Natural killer cell (primary cell): ENCODE measurements at regions of chr15 and their contacts with region 1.

Region 1: GRCh38 chr15:57527382-57528091 is 64.2 kb upstream of the MYZAP start:
- DNase-seq: peak in 1 of 2 donors; percentile 63
- ATAC-seq: peak in 1 of 3 donors; percentile 57
- H3K4me3 ChIP-seq: no peak overlapping the region
- H3K4me3 Mint-ChIP-seq: no peak overlapping the region
- H3K27ac ChIP-seq: no peak overlapping the region
- H3K27ac Mint-ChIP-seq: no peak overlapping the region
- H3K4me1 ChIP-seq: no peaks in the 10 kb centered on the region
- H3K4me1 Mint-ChIP-seq: no peaks in the 10 kb centered on the region
- H3K27me3 ChIP-seq: no peaks in the 10 kb centered on the region
- H3K27me3 Mint-ChIP-seq: peaks cover 7 to 22% of the 10 kb centered on the region in 2 donors
- CTCF ChIP-seq: peak; percentile 14

Region 2: GRCh38 chr15:56821721-56822425 is 705.7 kb before region 1 on chr15:
- intact Hi-C with region 1: loop called (anchors 5 kb)
- DNase-seq: peak; percentile 41 to 61
- ATAC-seq: peak; percentile 76 to 85 (median 78)
- H3K4me3 ChIP-seq: no peak overlapping the region
- H3K4me3 Mint-ChIP-seq: no peak overlapping the region
- H3K27ac ChIP-seq: no peak overlapping the region
- H3K27ac Mint-ChIP-seq: no peak overlapping the region
- H3K4me1 ChIP-seq: no peaks in the 10 kb centered on the region
- H3K4me1 Mint-ChIP-seq: no peaks in the 10 kb centered on the region
- H3K27me3 ChIP-seq: no peaks in the 10 kb centered on the region
- H3K27me3 Mint-ChIP-seq: peaks cover 0 to 2% of the 10 kb centered on the region in 2 donors
- CTCF ChIP-seq: peak; percentile 78

Region 3: DNA sequence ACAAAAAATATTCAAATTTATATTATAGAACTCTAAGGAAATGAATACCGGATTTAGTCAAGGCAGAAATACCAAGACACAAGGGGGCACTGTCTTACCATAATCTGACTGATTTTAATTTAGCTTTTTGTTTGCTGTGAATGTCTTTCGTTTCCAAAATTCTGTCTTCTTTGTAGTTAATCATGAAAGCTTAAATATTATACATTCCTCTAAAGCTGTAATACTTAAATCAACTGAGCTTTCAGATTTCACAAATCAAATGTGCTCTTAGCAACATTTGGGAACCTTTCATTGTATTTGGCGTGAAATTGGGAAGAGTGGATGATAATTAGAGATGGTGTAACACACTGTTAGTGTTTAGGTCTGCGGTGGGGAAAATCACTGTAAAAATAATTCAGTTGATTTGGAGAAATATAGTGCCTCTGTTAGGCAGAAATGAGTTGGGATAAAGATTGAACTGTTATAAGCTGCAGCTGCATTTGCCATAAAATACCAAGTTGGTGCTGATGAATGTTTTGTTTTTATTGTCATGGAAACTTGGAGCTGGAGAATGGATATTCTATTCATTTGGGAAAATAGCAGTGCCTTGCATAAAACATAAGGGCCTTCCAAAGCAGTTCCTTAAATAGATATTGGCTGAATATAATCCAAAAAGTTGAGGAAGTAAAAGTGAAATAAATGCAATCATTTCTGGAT is 380.9 kb before region 1 on chr15:
- intact Hi-C with region 1: loop called (anchors 10 kb)
- DNase-seq: peak in 1 of 2 donors; percentile 55
- ATAC-seq: peak in 1 of 3 donors; percentile 44
- H3K4me3 ChIP-seq: no peak overlapping the region
- H3K4me3 Mint-ChIP-seq: no peak overlapping the region
- H3K27ac ChIP-seq: no peak overlapping the region
- H3K27ac Mint-ChIP-seq: no peak overlapping the region
- H3K4me1 ChIP-seq: no peaks in the 10 kb centered on the region
- H3K4me1 Mint-ChIP-seq: peaks cover 16 to 24% of the 10 kb centered on the region in 2 donors
- H3K27me3 ChIP-seq: no peaks in the 10 kb centered on the region
- H3K27me3 Mint-ChIP-seq: no peaks in the 10 kb centered on the region
- CTCF ChIP-seq: peak; percentile 70

Region 4: GRCh38 chr15:57680021-57680420 is 152.5 kb after region 1 on chr15:
- intact Hi-C with region 1: no loop called
- DNase-seq: no peak
- ATAC-seq: no peak
- H3K4me3 ChIP-seq: no peak overlapping the region
- H3K4me3 Mint-ChIP-seq: no peak overlapping the region
- H3K27ac ChIP-seq: no peak overlapping the region
- H3K27ac Mint-ChIP-seq: no peak overlapping the region
- H3K4me1 ChIP-seq: no peaks in the 10 kb centered on the region
- H3K4me1 Mint-ChIP-seq: peaks cover 0 to 6% of the 10 kb centered on the region in 2 donors
- H3K27me3 ChIP-seq: no peaks in the 10 kb centered on the region
- H3K27me3 Mint-ChIP-seq: peaks cover 8 to 11% of the 10 kb centered on the region in 2 donors
- CTCF ChIP-seq: no peak